Common myeloid progenitor, CD34-positive (primary cell): ENCODE measurements at regions of chr3 and their contacts with region 1.

Region 1: DNA sequence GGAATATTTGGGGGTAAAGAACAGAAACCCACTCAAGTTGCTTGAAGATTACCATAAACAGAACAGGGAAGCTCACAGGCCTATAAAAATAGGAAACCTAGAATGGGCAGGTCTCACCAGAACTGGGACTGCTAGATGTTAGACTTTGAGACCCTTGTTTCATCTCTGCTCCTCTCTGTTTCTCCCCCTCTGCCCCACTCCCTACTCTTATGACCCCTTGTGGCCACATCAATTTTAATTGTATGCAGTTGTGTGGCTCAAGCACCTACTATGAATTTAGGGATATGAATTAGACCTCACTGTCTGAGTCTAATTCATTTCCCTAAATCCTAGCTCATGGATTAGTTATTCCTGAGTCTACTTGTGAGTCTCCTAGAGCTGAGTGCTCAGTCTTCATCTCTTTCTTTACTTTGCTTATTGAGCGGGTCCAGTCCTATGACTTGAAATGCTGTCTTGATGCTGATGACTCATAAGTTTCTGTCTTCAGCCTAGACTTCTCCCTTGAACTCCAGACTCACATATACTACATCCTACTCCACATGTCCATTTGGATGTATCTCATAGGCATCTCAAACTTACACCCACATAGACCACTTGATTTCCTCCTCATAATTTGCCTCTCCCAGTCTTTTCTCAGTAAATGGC is 78.7 kb downstream of the ITPR1 start:
- DNase-seq: peak; percentile 58 to 73 (median 66)
- H3K4me3 ChIP-seq: no peak overlapping the region
- H3K27ac ChIP-seq: no peak overlapping the region
- H3K4me1 ChIP-seq: peaks cover 0 to 13% (median 10%) of the 10 kb centered on the region in 4 experiments
- H3K27me3 ChIP-seq: no peaks in the 10 kb centered on the region

Region 2: DNA sequence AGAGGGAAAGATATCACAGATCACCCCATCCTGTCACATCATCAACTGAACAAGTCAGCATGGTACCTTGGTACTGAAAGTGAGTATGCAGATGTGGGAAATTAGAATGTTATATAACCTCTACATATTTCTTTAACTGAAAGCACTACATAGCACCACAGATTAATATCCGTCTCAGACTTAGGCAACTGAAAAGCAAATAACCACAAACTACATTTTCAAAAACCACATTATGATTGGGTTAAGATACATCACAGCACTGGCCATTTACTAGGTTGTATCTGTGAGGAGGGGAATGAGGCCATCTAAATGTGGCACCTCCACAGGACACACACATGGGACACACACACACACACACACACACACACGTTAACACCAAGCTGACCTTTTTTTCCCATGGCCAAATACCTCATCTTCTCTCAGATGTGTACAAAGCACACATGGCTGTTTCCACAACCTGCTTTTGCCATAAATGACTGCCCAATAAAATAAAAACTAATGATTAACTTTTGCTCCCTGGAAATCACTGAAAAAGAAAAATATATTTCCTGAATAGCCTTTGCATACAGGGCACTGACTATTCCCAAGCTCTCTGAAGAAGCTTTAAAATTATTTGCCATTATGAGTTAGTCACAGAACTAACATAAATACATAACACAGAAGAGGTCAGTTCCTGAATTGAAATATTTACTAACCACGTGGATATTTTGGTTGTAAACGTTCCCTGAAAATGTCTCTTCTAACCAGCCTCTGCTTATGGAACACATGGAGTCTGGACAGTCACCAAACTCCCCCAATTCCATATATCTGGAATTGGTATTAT is 164.9 kb before region 1 on chr3:
- CTCF ChIA-PET with region 1: no interaction called
- POLR2A ChIA-PET with region 1: no interaction called
- DNase-seq: peak in 2 of 3 donors; percentile 9 to 44
- H3K4me3 ChIP-seq: no peak overlapping the region
- H3K27ac ChIP-seq: no peak overlapping the region
- H3K4me1 ChIP-seq: peaks cover 0 to 22% (median 14%) of the 10 kb centered on the region in 4 experiments
- H3K27me3 ChIP-seq: no peaks in the 10 kb centered on the region

Region 3: GRCh38 chr3:4454142-4454541 is 117.7 kb before region 1 on chr3:
- CTCF ChIA-PET with region 1: no interaction called
- POLR2A ChIA-PET with region 1: no interaction called
- DNase-seq: no peak
- H3K4me3 ChIP-seq: no peak overlapping the region
- H3K27ac ChIP-seq: no peak overlapping the region
- H3K4me1 ChIP-seq: no peaks in the 10 kb centered on the region
- H3K27me3 ChIP-seq: no peaks in the 10 kb centered on the region

Region 4: DNA sequence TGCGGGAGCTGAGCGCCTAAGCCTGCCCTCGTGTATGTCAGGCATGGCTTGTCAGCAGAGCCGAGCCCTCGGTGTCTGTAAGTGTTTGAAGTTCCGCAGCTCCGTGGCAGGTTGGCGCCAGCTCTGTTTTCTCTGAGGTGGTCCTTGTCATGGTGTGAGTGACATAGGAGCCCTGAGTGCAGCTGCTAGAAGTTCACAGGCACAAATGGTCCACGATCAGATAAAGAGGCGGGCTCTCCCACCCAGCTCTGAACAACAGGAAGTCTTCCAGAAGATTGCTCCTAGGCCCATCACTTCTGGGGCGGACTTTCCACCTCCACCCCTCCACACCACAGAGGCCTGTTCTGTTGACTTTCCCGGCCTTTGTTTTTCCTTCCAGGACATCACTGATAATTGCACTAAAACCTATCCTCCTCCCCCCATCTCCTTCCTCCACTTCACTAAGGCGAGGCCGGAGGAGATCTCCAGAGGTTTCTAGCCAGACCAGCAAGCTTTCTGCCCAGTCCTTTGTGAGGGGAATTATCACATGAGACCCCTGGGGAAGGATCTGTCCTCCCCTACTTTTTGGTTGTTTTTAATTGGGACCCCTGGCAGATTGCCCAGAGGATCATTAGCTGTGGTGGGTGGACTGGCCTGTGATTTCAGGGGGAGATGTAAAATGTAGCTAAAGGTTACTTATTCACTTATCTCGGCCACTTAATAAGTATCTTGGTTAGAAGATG is 58.8 kb before region 1 on chr3:
- CTCF ChIA-PET with region 1: interaction called, 51 read pairs
- POLR2A ChIA-PET with region 1: interaction called, 4 read pairs
- DNase-seq: peak in 1 of 3 donors; percentile 72
- H3K4me3 ChIP-seq: peak overlapping the region in 1 of 7 experiments; percentile 0
- H3K27ac ChIP-seq: peak overlapping the region in 1 of 2 experiments; percentile 39
- H3K4me1 ChIP-seq: peaks cover 18 to 76% (median 56%) of the 10 kb centered on the region in 4 experiments
- H3K27me3 ChIP-seq: no peaks in the 10 kb centered on the region

Region 5: GRCh38 chr3:4524088-4525023 is 47.5 kb before region 1 on chr3:
- CTCF ChIA-PET with region 1: interaction called, 51 read pairs
- POLR2A ChIA-PET with region 1: no interaction called
- DNase-seq: peak in 1 of 3 donors; percentile 36
- H3K4me3 ChIP-seq: peak overlapping the region in 1 of 7 experiments; percentile 29
- H3K27ac ChIP-seq: no peak overlapping the region
- H3K4me1 ChIP-seq: peaks cover 24 to 59% (median 41%) of the 10 kb centered on the region in 4 experiments
- H3K27me3 ChIP-seq: no peaks in the 10 kb centered on the region

Region 6: GRCh38 chr3:4533489-4534443 is 38.0 kb before region 1 on chr3:
- CTCF ChIA-PET with region 1: interaction called, 16 read pairs
- POLR2A ChIA-PET with region 1: no interaction called
- DNase-seq: peak; percentile 93 to 99 (median 97)
- H3K4me3 ChIP-seq: peak overlapping the region in 5 of 7 experiments; percentile 16 to 57 (median 54)
- H3K27ac ChIP-seq: peak overlapping the region; percentile 69 to 83
- H3K4me1 ChIP-seq: peaks cover 20 to 74% (median 59%) of the 10 kb centered on the region in 4 experiments
- H3K27me3 ChIP-seq: no peaks in the 10 kb centered on the region

Region 7: GRCh38 chr3:4584456-4585249 is 12.8 kb after region 1 on chr3:
- CTCF ChIA-PET with region 1: interaction called, 21 read pairs
- POLR2A ChIA-PET with region 1: interaction called, 3 read pairs
- DNase-seq: peak; percentile 63 to 82 (median 80)
- H3K4me3 ChIP-seq: peak overlapping the region in 6 of 7 experiments; percentile 30 to 78 (median 61)
- H3K27ac ChIP-seq: peak overlapping the region; percentile 29 to 82
- H3K4me1 ChIP-seq: peaks cover 0 to 84% (median 60%) of the 10 kb centered on the region in 4 experiments
- H3K27me3 ChIP-seq: no peaks in the 10 kb centered on the region

Region 8: GRCh38 chr3:4595709-4596108 is 23.9 kb after region 1 on chr3:
- CTCF ChIA-PET with region 1: interaction called, 12 read pairs
- POLR2A ChIA-PET with region 1: no interaction called
- DNase-seq: no peak
- H3K4me3 ChIP-seq: no peak overlapping the region
- H3K27ac ChIP-seq: no peak overlapping the region
- H3K4me1 ChIP-seq: peaks cover 0 to 3% (median 2%) of the 10 kb centered on the region in 4 experiments
- H3K27me3 ChIP-seq: no peaks in the 10 kb centered on the region

Region 9: GRCh38 chr3:4614070-4614469 is 42.3 kb after region 1 on chr3:
- CTCF ChIA-PET with region 1: no interaction called
- POLR2A ChIA-PET with region 1: no interaction called
- DNase-seq: no peak
- H3K4me3 ChIP-seq: no peak overlapping the region
- H3K27ac ChIP-seq: no peak overlapping the region
- H3K4me1 ChIP-seq: peaks cover 0 to 1% (median 0%) of the 10 kb centered on the region in 4 experiments
- H3K27me3 ChIP-seq: no peaks in the 10 kb centered on the region